PC-9 (cell line): ENCODE measurements at regions of chr6 and their contacts with region 1.

Region 1: DNA sequence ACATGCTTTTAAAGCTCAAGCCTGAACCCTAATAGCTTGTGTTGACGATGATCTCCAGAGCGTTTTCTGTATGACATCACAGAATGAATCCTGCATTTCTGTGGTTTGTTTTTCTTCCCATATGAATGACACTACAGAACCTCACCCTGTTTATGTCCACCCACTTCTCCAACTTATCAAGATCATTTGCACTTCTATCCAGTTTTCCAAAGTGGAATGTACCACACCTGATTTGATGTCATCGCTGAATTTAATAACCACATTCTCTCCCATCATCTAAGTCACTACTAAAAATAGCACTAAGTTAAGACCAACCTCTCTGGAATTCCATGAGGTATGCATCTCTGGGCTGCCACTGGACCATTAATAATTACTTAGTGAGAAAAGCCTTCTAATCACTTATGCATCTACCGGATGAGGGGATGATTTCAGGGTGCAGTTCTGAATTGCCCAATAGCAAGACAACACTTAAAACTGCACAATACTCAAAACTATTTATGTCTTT is 33.3 kb upstream of the CITED2 start:
- DNase-seq: peak; percentile 51 to 100
- H3K4me3 ChIP-seq: peak overlapping the region; percentile 15; the same call in 1 of the 2 replicates
- H3K27ac ChIP-seq: peak overlapping the region; percentile 94
- H3K4me1 ChIP-seq: peaks cover 41% of the 10 kb centered on the region
- H3K27me3 ChIP-seq: no peaks in the 10 kb centered on the region
- CTCF ChIP-seq: no peak

Region 2: GRCh38 chr6:139433631-139434419 is 26.1 kb after region 1 on chr6:
- CTCF ChIA-PET with region 1: no interaction called
- POLR2A ChIA-PET with region 1: no interaction called
- intact Hi-C with region 1: loop called (anchors 1 kb)
- DNase-seq: peak in 1 of 2 experiments; percentile 89
- H3K4me3 ChIP-seq: no peak overlapping the region
- H3K27ac ChIP-seq: peak overlapping the region; percentile 33
- H3K4me1 ChIP-seq: peaks cover 53% of the 10 kb centered on the region
- H3K27me3 ChIP-seq: no peaks in the 10 kb centered on the region
- CTCF ChIP-seq: no peak

Region 3: DNA sequence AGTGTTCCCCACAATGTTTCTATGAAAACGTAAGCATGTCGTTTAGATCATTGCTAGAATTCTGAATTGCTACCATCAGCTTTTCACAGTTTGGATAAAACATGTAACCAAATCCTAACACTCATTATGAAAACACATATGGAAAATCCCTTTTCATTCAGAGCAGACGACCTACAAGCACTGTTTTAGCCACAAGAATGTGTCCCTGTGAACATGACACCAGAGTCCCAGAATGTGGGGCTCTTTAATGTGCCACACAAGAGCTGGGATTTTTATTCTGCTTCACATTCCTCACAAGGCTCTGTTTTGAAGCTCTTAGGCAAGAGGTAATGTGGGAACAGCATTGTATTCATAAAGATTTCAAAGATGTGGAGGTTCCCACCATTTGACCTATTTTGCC is 107.7 kb after region 1 on chr6:
- CTCF ChIA-PET with region 1: no interaction called
- POLR2A ChIA-PET with region 1: no interaction called
- intact Hi-C with region 1: loop called (anchors 2 kb)
- DNase-seq: no peak
- H3K4me3 ChIP-seq: no peak overlapping the region
- H3K27ac ChIP-seq: no peak overlapping the region
- H3K4me1 ChIP-seq: peaks cover 23% of the 10 kb centered on the region
- H3K27me3 ChIP-seq: no peaks in the 10 kb centered on the region
- CTCF ChIP-seq: no peak

Region 4: GRCh38 chr6:139708337-139709199 is 300.8 kb after region 1 on chr6:
- CTCF ChIA-PET with region 1: no interaction called
- POLR2A ChIA-PET with region 1: no interaction called
- intact Hi-C with region 1: loop called (anchors 10 kb)
- DNase-seq: peak; percentile 41 to 94
- H3K4me3 ChIP-seq: no peak overlapping the region
- H3K27ac ChIP-seq: peak overlapping the region; percentile 58
- H3K4me1 ChIP-seq: peaks cover 49% of the 10 kb centered on the region
- H3K27me3 ChIP-seq: no peaks in the 10 kb centered on the region
- CTCF ChIP-seq: no peak